Aorta (tissue), 5 donors: ENCODE measurements at regions of chr1 and their contacts with region 1.

Region 1: GRCh38 chr1:29230553-29231378 is at the start of gene MECR:
- DNase-seq: peak; percentile 95 to 98
- ATAC-seq: peak; percentile 98
- H3K4me3 ChIP-seq: peak within 1 kb of the TSS; percentile 68 to 77
- H3K27ac ChIP-seq: peak within 1 kb of the TSS; percentile 18 to 22
- H3K4me1 ChIP-seq: no peaks in the 10 kb centered on the region
- H3K27me3 ChIP-seq: no peaks in the 10 kb centered on the region
- total RNA-seq, gene MECR: 18.0 to 22.5 TPM

Region 2: GRCh38 chr1:28914228-28915030 is 316.3 kb before region 1 on chr1 and contains the start of gene EPB41:
- intact Hi-C with region 1: no loop called
- DNase-seq: peak; percentile 94 to 96
- ATAC-seq: peak; percentile 96
- H3K4me3 ChIP-seq: peak within 1 kb of the TSS; percentile 59 to 65
- H3K27ac ChIP-seq: peak within 1 kb of the TSS in 1 of 2 donors; percentile 26
- H3K4me1 ChIP-seq: no peaks in the 10 kb centered on the region
- H3K27me3 ChIP-seq: no peaks in the 10 kb centered on the region
- total RNA-seq, gene EPB41: 23.9 to 35.2 TPM

Region 3: GRCh38 chr1:29202584-29203340 is 28.0 kb before region 1 on chr1:
- intact Hi-C with region 1: no loop called
- DNase-seq: peak; percentile 95 to 99
- ATAC-seq: peak; percentile 96
- H3K4me3 ChIP-seq: no peak overlapping the region
- H3K27ac ChIP-seq: peak overlapping the region; percentile 80 to 88
- H3K4me1 ChIP-seq: no peaks in the 10 kb centered on the region
- H3K27me3 ChIP-seq: no peaks in the 10 kb centered on the region

Region 4: GRCh38 chr1:29297450-29297849 is 66.7 kb after region 1 on chr1:
- intact Hi-C with region 1: no loop called
- DNase-seq: peak in 1 of 2 donors; percentile 9
- ATAC-seq: no peak
- H3K4me3 ChIP-seq: no peak overlapping the region
- H3K27ac ChIP-seq: no peak overlapping the region
- H3K4me1 ChIP-seq: no peaks in the 10 kb centered on the region
- H3K27me3 ChIP-seq: no peaks in the 10 kb centered on the region

Region 5: DNA sequence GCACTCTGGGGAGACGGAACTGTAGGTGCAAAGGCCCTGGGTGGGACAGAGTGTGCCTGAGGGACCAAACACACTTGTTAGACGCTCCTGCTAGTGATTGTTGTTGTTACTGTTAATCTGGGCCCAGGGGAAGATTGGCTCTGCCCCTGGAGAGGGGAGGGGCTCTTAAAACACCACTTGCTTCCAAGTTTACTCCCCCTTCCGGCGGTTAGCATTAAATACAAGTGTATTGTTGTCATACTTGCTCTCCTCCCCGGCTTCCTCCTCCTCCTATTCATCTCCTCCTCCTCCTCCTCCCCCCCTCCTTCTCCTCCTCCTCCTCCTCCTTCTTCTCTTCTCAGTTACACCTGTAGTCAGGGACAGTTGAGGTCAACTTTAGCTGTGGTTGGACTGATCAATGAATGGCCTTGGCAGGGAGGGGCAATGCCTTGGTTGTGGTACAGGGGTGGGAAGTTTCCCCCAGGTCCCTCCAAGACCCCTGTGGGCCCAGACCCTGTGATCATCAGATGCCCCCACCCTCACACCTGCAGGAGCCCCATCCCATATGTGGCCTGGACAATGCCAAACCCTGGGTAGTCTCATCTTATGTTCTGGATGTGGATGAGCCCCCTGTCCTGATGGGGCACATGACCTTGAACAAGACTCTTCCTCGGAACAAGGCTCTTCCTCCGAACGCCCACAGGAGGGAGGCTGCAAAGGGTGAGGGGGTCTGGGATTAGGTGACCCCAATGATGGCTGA is 222.9 kb after region 1 on chr1:
- intact Hi-C with region 1: loop called in 1 of 2 experiments (anchors 10 kb)
- DNase-seq: peak; percentile 30 to 36
- ATAC-seq: no peak
- H3K4me3 ChIP-seq: no peak overlapping the region
- H3K27ac ChIP-seq: no peak overlapping the region
- H3K4me1 ChIP-seq: no peaks in the 10 kb centered on the region
- H3K27me3 ChIP-seq: no peaks in the 10 kb centered on the region

Region 6: GRCh38 chr1:29703596-29704370 is 473.0 kb after region 1 on chr1:
- intact Hi-C with region 1: loop called in 1 of 2 experiments (anchors 10 kb)
- DNase-seq: no peak
- ATAC-seq: no peak
- H3K4me3 ChIP-seq: no peak overlapping the region
- H3K27ac ChIP-seq: no peak overlapping the region
- H3K4me1 ChIP-seq: no peaks in the 10 kb centered on the region
- H3K27me3 ChIP-seq: no peaks in the 10 kb centered on the region

Region 7: DNA sequence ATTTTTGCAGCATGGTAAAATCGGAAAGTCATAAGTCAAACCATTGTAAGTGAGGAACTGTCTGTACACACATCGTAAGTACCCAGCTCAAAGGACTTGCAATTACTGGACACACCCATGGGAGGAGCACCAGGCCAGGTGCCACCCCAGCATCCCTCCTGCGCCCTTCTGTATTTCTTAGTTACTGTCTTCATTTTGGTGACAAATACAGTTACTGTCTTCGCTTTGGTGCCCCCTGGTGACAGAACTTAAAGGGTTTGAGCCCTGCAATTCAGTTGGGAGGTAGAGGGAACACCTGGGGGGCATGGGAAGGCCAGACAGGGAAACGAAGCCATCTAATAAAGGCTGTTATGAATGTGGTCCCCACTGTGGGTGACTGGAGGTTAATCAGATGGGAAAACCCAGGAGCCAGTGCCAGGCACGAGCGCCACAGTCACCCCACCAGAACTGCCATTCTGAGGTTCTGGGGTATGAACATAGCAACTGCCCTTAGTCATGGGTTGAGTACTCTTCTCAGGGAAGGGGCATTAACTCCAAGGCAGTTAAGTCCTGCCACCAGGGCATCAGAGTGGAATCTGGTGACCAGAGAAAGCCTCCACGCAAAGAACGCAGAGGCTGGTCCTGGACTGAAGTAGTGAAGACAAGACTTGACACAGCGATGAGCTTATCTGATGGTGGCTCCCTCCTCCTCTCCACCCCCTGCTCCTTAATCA is 618.4 kb after region 1 on chr1:
- intact Hi-C with region 1: loop called (anchors 5 to 10 kb)
- DNase-seq: no peak
- ATAC-seq: no peak
- H3K4me3 ChIP-seq: no peak overlapping the region
- H3K27ac ChIP-seq: no peak overlapping the region
- H3K4me1 ChIP-seq: no peaks in the 10 kb centered on the region
- H3K27me3 ChIP-seq: no peaks in the 10 kb centered on the region

Region 8: DNA sequence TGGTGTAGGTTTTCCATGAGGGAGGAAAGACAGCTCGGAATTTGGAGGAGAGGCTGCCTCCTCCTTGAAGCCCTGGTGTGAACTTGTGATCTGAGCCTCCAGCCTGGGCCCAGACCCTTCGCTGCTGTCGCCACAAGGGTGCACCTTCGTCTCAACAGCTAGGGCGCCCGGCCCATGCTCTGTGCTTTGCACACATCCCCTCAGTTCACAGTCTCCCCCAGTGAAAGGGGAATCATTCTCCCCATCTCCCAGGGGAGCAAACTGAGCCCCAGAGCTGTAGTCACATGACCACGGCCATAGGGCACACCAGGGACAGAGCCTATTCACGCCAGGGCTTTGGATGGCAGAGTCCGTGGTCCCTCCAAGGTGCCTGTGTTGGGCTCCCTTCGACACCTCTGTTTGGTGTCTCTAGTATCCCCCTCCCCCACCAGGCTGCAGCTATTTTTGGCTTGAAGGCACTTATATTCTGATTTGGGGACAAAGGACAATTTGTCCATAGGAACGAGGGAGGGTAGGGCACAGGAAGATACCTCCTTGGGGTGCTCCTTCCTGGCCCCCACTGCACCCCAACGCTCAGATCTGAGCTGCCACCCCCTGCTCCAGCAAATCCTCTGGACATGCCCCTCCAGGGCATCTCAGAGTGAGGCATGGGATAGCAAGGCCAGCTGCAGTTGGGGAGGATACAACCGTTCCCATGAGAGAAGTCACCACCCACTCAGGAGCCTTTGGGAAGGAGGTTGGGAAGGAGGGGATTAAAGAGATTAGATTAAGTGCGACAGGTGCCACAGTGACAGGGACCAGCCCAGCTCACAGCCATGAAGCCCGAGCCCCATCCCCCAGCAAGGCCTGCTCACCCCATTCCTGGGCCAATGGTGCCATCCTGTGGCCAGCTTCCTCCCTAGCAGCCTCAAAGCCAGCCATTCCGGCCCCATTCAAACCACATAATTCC is 1476.9 kb after region 1 on chr1:
- intact Hi-C with region 1: loop called in 1 of 2 experiments (anchors 5 kb)
- DNase-seq: peak; percentile 76 to 90
- ATAC-seq: peak; percentile 79
- H3K4me3 ChIP-seq: no peak overlapping the region
- H3K27ac ChIP-seq: no peak overlapping the region
- H3K4me1 ChIP-seq: no peaks in the 10 kb centered on the region
- H3K27me3 ChIP-seq: no peaks in the 10 kb centered on the region